Dorsolateral prefrontal cortex (tissue), 120 donors: ENCODE measurements at regions of chr3 and their contacts with region 1.

Region 1: GRCh38 chr3:65190111-65190510 is 502.3 kb upstream of the ADAMTS9 start:
- DNase-seq: no peak
- H3K4me3 ChIP-seq: no peak overlapping the region
- H3K27ac ChIP-seq: no peak overlapping the region
- H3K27me3 ChIP-seq: peaks cover 0 to 4% (median 0%) of the 10 kb centered on the region in 45 donors
- CTCF ChIP-seq: no peak

Region 2: GRCh38 chr3:65672871-65673815 is 483.0 kb after region 1 on chr3:
- intact Hi-C with region 1: loop called in 1 of 2 experiments (anchors 5 kb)
- DNase-seq: peak; percentile 46 to 76 (median 63)
- H3K4me3 ChIP-seq: no peak overlapping the region
- H3K27ac ChIP-seq: no peak overlapping the region
- H3K27me3 ChIP-seq: no peaks in the 10 kb centered on the region
- CTCF ChIP-seq: peak; percentile 76 to 98 (median 88)

Region 3: GRCh38 chr3:66738625-66739365 is 1548.7 kb after region 1 on chr3:
- intact Hi-C with region 1: no loop called
- DNase-seq: no peak
- H3K4me3 ChIP-seq: no peak overlapping the region
- H3K27ac ChIP-seq: no peak overlapping the region
- H3K27me3 ChIP-seq: no peaks in the 10 kb centered on the region
- CTCF ChIP-seq: no peak